Breast epithelium (tissue), 4 donors: ENCODE measurements at regions of chr2 and their contacts with region 1.

Region 1: GRCh38 chr2:27217217-27218121 is at the start of gene CAD:
- DNase-seq: peak; percentile 65 to 82
- H3K4me3 ChIP-seq: peak within 1 kb of the TSS; percentile 58 to 81 (median 67)
- H3K27ac ChIP-seq: peak within 1 kb of the TSS; percentile 69 to 77
- H3K4me1 ChIP-seq: peaks cover 0 to 9% of the 10 kb centered on the region in 2 donors
- H3K27me3 ChIP-seq: no peaks in the 10 kb centered on the region
- CTCF ChIP-seq: peak in 2 of 3 donors; percentile 18 to 27
- POLR2A ChIP-seq: no peak
- total RNA-seq, gene CAD: 15.5 to 33.4 (median 17.3) TPM

Region 2: DNA sequence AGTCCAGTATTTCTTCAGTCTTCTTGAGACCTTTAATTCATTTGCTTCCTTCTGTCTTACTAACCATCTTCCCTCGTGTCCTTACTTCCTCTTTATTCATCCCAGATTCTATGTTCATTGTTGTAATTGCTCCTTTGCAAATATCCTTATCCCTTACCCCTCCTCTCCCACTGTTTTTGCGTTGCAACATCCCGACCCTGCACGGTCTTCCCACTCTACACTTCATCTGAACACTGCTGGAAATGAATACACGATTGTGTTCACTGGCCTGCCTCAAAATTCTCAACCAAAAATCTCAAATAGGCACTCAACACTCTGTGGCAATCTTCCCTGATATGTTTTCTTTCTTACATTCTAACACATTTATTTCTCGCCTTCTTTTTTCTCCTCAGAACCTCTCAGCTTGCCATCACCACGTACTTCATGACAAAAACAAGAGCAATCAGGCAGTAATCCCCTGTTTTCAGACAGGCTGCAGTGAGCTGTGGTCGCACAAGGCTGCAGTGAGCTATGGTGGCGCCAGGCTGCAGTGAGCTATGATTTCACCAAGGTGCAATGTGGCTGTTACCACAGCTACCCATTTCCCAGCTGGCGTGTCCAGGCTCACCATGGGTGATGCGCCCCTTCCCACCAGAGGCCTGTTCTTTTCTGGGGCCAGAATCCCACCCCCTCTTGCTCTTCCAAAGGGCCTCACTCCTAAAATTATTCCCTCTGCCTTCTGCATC is 43.0 kb before region 1 on chr2:
- intact Hi-C with region 1: loop called (anchors 5 kb)
- DNase-seq: no peak
- H3K4me3 ChIP-seq: no peak overlapping the region
- H3K27ac ChIP-seq: peak overlapping the region in 1 of 2 donors; percentile 69
- H3K4me1 ChIP-seq: peaks cover 0 to 3% of the 10 kb centered on the region in 2 donors
- H3K27me3 ChIP-seq: no peaks in the 10 kb centered on the region
- CTCF ChIP-seq: no peak
- POLR2A ChIP-seq: no peak

Region 3: GRCh38 chr2:27303093-27304025 is 85.9 kb after region 1 on chr2:
- intact Hi-C with region 1: loop called (anchors 2 kb)
- DNase-seq: no peak
- H3K4me3 ChIP-seq: peak overlapping the region; percentile 25 to 44 (median 39)
- H3K27ac ChIP-seq: no peak overlapping the region
- H3K4me1 ChIP-seq: no peaks in the 10 kb centered on the region
- H3K27me3 ChIP-seq: peaks cover 17 to 29% of the 10 kb centered on the region in 2 donors
- CTCF ChIP-seq: peak; percentile 63 to 78 (median 64)
- POLR2A ChIP-seq: no peak